Endothelial cell of umbilical vein (primary cell): ENCODE measurements at regions of chr18 and their contacts with region 1.

Region 1: GRCh38 chr18:34122724-34123334 is 101.9 kb downstream of the NOL4 start:
- DNase-seq: peak; percentile 56
- H3K4me3 ChIP-seq: no peak overlapping the region
- H3K27ac ChIP-seq: no peak overlapping the region
- H3K4me1 ChIP-seq: no peaks in the 10 kb centered on the region
- H3K27me3 ChIP-seq: no peaks in the 10 kb centered on the region
- CTCF ChIP-seq: peak; percentile 68
- POLR2A ChIP-seq: no peak

Region 2: DNA sequence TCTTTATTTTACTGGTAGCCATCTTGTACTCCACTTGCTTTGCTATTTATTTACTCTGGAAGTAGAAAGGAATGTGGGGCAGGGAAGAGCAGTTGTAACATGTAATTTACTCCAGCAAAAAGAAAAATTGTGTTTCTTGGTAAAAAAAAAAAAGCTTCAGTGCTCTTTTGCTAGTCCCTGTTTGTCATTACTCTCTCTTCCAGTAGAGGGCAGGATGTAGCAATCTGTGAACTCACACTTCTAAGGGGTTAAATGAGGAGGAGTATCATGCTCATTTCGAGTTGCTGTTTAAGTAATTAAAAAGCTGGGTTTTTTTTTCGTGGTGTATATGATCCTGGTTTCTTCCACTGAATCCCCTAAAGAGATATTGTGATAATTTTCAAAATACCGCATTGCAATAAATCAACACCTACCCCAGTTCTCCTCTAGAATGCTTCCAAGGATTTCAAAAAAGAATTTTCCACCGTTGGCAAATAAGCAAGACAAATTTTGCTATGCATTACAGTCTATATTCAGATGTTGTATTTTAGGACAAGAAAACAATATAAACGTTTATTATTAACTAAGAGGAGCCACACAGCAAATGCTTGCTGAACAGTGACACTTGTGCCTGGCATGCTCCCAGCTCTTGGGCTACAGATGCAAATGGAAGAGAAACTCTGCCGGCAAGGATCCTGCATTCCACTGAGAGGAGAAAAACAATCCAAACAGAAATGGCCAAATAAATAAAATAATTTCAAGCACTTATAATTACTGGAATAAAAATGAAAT is 283.2 kb before region 1 on chr18:
- CTCF ChIA-PET with region 1: no interaction called
- POLR2A ChIA-PET with region 1: no interaction called
- dilution Hi-C with region 1: no loop called
- intact Hi-C with region 1: loop called (anchors 5 kb)
- DNase-seq: peak; percentile 59
- H3K4me3 ChIP-seq: no peak overlapping the region
- H3K27ac ChIP-seq: no peak overlapping the region
- H3K4me1 ChIP-seq: no peaks in the 10 kb centered on the region
- H3K27me3 ChIP-seq: peaks cover 0 to 2% of the 10 kb centered on the region in 2 experiments
- CTCF ChIP-seq: peak; percentile 42 to 66
- POLR2A ChIP-seq: no peak

Region 3: GRCh38 chr18:34153711-34154110 is 30.9 kb after region 1 on chr18:
- CTCF ChIA-PET with region 1: interaction called, 14 read pairs
- POLR2A ChIA-PET with region 1: no interaction called
- dilution Hi-C with region 1: no loop called
- intact Hi-C with region 1: no loop called
- DNase-seq: peak; percentile 21
- H3K4me3 ChIP-seq: peak overlapping the region in 2 of 3 experiments; percentile 27 to 45
- H3K27ac ChIP-seq: no peak overlapping the region
- H3K4me1 ChIP-seq: no peaks in the 10 kb centered on the region
- H3K27me3 ChIP-seq: peaks cover 4 to 14% of the 10 kb centered on the region in 2 experiments
- CTCF ChIP-seq: no peak
- POLR2A ChIP-seq: no peak

Region 4: GRCh38 chr18:34311468-34311867 is 188.6 kb after region 1 on chr18:
- CTCF ChIA-PET with region 1: interaction called, 22 read pairs
- POLR2A ChIA-PET with region 1: no interaction called
- dilution Hi-C with region 1: no loop called
- intact Hi-C with region 1: no loop called
- DNase-seq: no peak
- H3K4me3 ChIP-seq: no peak overlapping the region
- H3K27ac ChIP-seq: no peak overlapping the region
- H3K4me1 ChIP-seq: no peaks in the 10 kb centered on the region
- H3K27me3 ChIP-seq: no peaks in the 10 kb centered on the region
- CTCF ChIP-seq: no peak
- POLR2A ChIP-seq: no peak

Region 5: DNA sequence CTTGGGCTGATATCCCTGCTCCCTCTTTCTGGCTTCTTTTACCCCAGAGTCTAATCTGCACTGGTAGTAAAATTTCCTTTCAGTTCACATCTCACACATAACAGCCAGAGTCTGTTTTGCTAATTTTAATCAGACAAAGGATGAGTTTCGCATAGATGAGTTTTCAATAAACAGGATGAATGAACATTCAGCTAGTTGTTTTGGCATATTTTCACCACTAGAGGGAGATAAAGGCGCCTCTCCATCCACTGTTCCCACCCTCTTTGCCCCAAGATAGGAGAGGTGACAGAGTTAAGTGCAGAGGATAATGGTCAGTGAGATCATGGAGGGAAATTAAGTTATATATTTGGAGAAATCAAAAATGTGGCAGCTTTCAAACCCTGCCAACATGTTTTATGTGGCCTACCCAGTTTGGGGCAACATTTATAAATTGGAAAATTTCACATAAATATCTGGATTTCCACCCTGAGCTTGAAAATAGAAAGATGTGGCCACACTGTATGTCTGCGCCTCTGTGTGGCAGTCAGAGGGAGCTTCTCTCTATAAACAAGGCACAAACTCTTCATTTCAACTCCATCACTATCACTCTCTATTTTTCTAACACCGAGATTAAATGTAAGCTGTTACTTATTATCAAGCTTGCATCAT is 538.8 kb after region 1 on chr18:
- CTCF ChIA-PET with region 1: interaction called, 18 read pairs
- POLR2A ChIA-PET with region 1: no interaction called
- dilution Hi-C with region 1: no loop called
- intact Hi-C with region 1: loop called (anchors 10 kb)
- DNase-seq: peak; percentile 62
- H3K4me3 ChIP-seq: no peak overlapping the region
- H3K27ac ChIP-seq: no peak overlapping the region
- H3K4me1 ChIP-seq: peaks cover 21% of the 10 kb centered on the region
- H3K27me3 ChIP-seq: no peaks in the 10 kb centered on the region
- CTCF ChIP-seq: peak; percentile 73 to 75
- POLR2A ChIP-seq: no peak